ENCODE measurements at regions of chr11 and their contacts with region 1.

Region 1: GRCh38 chr11:124194698-124195410 is 11.7 kb downstream of the OR10D3 start:
- DNase-seq: peak in 1 of 5 donors; percentile 29
- ATAC-seq: no peak
- H3K4me3 ChIP-seq: no peak overlapping the region
- H3K27ac ChIP-seq: no peak overlapping the region
- H3K4me1 ChIP-seq: peaks cover 0 to 9% (median 0%) of the 10 kb centered on the region in 12 donors
- H3K27me3 ChIP-seq: no peaks in the 10 kb centered on the region
- CTCF ChIP-seq: peak in 10 of 12 donors; percentile 20 to 72 (median 38)
- POLR2A ChIP-seq: no peak

Region 2: DNA sequence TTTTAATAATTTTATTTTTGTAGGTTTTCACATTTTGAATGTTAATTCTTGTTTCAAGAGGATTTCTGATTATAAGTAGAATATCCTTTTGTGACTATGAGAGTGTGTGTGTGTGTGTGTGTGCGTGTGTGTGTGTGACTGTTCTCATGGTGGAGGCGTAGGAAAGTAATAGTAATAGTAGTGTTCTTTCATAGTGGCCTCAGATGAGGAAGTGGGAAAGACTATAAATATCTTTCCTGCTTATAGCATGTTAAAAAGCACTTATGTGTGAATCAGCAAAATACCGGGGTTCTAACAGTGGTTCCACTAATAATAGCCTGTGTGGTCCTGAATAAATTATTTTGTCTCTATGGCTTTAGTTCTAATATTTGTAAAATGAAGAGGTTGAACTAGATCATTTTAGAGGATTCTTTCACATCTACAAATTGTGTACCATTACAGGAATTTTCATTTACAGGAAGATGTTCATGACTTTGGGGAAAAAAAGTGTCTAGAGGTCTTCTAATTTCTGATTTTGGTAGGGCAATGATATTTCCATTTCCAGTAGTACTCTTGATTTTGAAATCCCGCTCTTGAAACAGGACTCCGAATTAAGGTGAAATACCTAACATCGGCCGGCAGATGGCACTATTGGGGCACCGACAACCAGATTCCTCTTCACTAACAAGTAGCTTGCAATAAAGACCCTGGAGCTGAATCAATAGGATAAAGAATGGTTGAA is 123.8 kb before region 1 on chr11:
- intact Hi-C with region 1: loop called in 4 of 10 experiments (anchors 5 to 10 kb)
- DNase-seq: peak in 4 of 5 donors; percentile 32 to 71 (median 44)
- ATAC-seq: peak in 2 of 4 donors; percentile 26 to 43
- H3K4me3 ChIP-seq: no peak overlapping the region
- H3K27ac ChIP-seq: no peak overlapping the region
- H3K4me1 ChIP-seq: peaks cover 0 to 19% (median 0%) of the 10 kb centered on the region in 12 donors
- H3K27me3 ChIP-seq: peaks cover under 1 to 74% (median 14%) of the 10 kb centered on the region in 9 donors
- CTCF ChIP-seq: peak; percentile 66 to 85 (median 74)
- POLR2A ChIP-seq: no peak

Region 3: GRCh38 chr11:124256076-124256475 is 61.2 kb after region 1 on chr11 and contains the start of gene OR8G5:
- intact Hi-C with region 1: no loop called
- DNase-seq: no peak
- ATAC-seq: no peak
- H3K4me3 ChIP-seq: no peak within 1 kb of the TSS
- H3K27ac ChIP-seq: no peak within 1 kb of the TSS
- H3K4me1 ChIP-seq: no peaks in the 10 kb centered on the region
- H3K27me3 ChIP-seq: peaks cover 0 to 5% (median 0%) of the 10 kb centered on the region in 9 donors
- CTCF ChIP-seq: no peak
- POLR2A ChIP-seq: no peak
- total RNA-seq, gene OR8G5: not detected

Region 4: DNA sequence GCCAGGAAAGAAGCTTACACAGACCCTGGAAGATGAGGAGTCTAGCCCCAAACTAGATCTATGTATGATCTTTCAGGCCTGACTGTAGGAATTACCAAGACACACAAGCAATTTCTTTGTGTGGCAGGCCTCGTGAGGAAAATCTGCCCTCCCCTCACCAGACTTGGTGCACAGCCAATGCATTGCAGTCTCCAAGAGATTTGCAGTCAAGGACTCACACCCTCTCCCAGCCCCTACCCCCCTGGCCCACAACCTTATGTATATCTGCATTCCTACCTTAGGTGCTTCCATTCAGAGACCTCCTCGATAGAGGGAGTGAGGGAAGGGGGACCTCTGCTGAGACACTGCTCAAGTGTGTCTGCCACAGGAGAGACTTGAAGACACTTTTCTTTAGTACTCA is 338.8 kb after region 1 on chr11:
- intact Hi-C with region 1: no loop called
- DNase-seq: no peak
- ATAC-seq: no peak
- H3K4me3 ChIP-seq: no peak overlapping the region
- H3K27ac ChIP-seq: no peak overlapping the region
- H3K4me1 ChIP-seq: peaks cover 0 to 20% (median 0%) of the 10 kb centered on the region in 12 donors
- H3K27me3 ChIP-seq: no peaks in the 10 kb centered on the region
- CTCF ChIP-seq: no peak
- POLR2A ChIP-seq: no peak